ENCODE measurements at regions of chr16 and their contacts with region 1.

Region 1: GRCh38 chr16:69565671-69566239 is at the start of gene NFAT5:
- DNase-seq: peak; percentile 94
- ATAC-seq: peak; percentile 25
- H3K4me3 Mint-ChIP-seq: peak within 1 kb of the TSS; percentile 99
- H3K27ac Mint-ChIP-seq: peak within 1 kb of the TSS; percentile 99
- H3K4me1 Mint-ChIP-seq: peaks cover 54% of the 10 kb centered on the region
- H3K27me3 Mint-ChIP-seq: no peaks in the 10 kb centered on the region
- total RNA-seq, gene NFAT5: 29.6 to 37.9 TPM

Region 2: GRCh38 chr16:68756250-68756915 is 809.4 kb before region 1 on chr16:
- CTCF ChIA-PET with region 1: no interaction called
- POLR2A ChIA-PET with region 1: interaction called, 5 read pairs
- intact Hi-C with region 1: loop called in 1 of 2 experiments (anchors 2 kb)
- DNase-seq: peak; percentile 90
- ATAC-seq: peak; percentile 69
- H3K4me3 Mint-ChIP-seq: peak overlapping the region; percentile 52
- H3K27ac Mint-ChIP-seq: peak overlapping the region; percentile 97
- H3K4me1 Mint-ChIP-seq: peaks cover 66% of the 10 kb centered on the region
- H3K27me3 Mint-ChIP-seq: no peaks in the 10 kb centered on the region

Region 3: DNA sequence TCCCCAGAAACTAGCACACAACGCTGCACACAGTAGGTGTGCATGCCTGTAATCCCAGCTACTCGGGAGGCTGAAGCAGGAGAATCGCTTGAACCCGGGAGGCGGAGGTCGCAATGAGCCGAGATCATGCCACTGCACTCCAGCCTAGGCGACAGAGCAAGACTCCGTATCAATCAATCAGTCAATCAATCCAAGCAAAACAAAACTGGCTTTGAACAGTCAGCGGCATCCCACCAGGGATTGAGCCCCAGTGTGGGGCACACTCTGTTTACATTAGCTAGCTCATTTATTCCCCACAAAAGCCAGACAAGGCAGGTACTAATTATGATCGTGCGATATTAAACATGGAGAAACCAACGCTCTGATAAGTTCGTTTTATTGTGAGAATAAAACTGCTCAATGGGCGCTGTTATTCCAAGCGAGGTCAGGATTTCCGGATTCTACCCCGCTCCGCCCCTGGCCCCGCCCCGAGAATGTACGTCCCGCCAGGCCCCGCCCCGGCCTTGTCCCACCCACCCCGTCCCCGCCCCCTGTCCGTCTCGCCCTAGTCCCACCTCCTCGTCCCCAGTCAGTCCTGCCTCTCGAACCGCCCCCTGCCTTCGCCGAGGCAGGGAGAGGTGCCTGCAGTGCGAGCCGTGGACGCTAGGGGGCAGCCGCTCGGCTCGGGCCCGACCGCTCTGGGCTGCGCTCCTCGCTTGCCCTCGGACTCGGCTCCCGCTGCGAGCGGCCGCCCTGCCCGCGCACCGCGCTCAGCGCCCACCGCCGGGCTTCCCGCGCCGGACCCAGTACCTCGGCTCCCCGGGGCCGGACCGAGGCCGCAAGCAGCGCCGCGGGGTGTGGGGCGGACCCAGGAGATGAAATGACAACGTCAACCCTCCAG is 254.9 kb before region 1 on chr16 and contains the start of gene VPS4A:
- CTCF ChIA-PET with region 1: no interaction called
- POLR2A ChIA-PET with region 1: no interaction called
- intact Hi-C with region 1: loop called in 1 of 2 experiments (anchors 1 kb)
- DNase-seq: peak; percentile 98
- ATAC-seq: peak; percentile 97
- H3K4me3 Mint-ChIP-seq: peak within 1 kb of the TSS; percentile 100
- H3K27ac Mint-ChIP-seq: peak within 1 kb of the TSS; percentile 97
- H3K4me1 Mint-ChIP-seq: peaks cover 26% of the 10 kb centered on the region
- H3K27me3 Mint-ChIP-seq: no peaks in the 10 kb centered on the region
- total RNA-seq, gene VPS4A: 28.4 to 31.9 TPM

Region 4: DNA sequence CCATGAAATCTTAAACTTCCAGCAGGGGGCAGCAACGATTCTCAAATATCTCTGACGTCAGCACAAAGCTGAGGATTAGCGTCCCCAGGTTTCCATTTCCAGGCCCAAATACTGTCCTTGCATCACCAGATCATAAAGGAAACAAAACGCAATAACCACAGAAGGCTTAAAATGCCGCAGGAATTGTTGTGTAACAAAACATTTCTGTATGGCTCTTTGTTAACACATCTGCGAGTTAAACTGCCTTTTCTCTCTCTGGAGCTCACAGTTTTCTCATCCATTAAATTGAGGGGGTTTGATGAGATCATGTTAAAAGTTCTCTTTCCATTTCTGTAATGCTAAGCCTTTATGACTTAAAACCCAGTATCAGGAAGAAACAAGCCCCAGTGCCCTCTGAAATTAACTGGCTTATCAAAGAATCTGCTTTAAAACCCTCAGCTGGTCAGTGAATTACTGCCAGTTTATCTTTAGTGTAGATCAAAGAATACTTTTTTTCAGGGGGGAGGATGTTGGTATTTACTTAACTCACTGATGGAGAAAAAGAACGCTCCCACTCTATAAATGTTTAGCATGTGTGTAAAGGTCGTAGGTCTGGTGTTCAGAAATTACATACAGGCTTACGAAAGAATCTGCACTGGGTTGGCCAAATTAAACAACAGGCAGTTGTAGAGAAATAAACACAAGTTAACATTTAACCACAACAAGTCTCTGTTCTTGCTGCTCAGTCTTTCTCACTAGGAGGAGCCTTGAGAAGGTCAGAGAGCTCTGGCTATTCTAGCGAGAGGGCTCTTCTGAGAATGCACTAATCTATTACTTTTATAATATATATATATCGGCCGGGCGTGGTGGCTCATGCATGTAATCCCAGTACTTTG is 169.3 kb before region 1 on chr16:
- CTCF ChIA-PET with region 1: interaction called, 12 read pairs
- POLR2A ChIA-PET with region 1: no interaction called
- intact Hi-C with region 1: loop called (anchors 1 kb)
- DNase-seq: peak; percentile 83
- ATAC-seq: peak; percentile 63
- H3K4me3 Mint-ChIP-seq: no peak overlapping the region
- H3K27ac Mint-ChIP-seq: peak overlapping the region; percentile 70
- H3K4me1 Mint-ChIP-seq: peaks cover 20% of the 10 kb centered on the region
- H3K27me3 Mint-ChIP-seq: no peaks in the 10 kb centered on the region

Region 5: DNA sequence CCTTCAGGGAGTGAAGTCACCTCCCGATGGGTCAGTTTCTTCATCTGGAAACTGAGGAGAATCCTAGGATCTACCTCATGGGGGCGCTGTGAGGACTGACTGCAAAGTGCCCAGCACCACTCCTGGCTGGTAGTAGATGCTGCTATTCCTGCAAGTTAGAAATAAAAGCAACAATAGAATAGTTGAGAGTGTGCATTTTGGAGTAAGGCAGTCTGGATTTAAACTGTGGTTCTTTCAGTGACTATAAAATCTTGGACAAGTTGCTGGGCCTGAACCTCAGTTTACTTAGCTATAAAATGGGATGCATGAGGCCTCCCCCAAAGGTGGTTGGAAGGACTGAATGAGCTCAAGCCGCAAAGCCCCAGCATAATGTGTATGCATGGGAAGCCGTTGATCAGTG is 70.8 kb before region 1 on chr16:
- CTCF ChIA-PET with region 1: no interaction called
- POLR2A ChIA-PET with region 1: no interaction called
- intact Hi-C with region 1: loop called in 1 of 2 experiments (anchors 1 kb)
- DNase-seq: peak; percentile 76
- ATAC-seq: peak; percentile 71
- H3K4me3 Mint-ChIP-seq: no peak overlapping the region
- H3K27ac Mint-ChIP-seq: peak overlapping the region; percentile 19
- H3K4me1 Mint-ChIP-seq: no peaks in the 10 kb centered on the region
- H3K27me3 Mint-ChIP-seq: no peaks in the 10 kb centered on the region

Region 6: DNA sequence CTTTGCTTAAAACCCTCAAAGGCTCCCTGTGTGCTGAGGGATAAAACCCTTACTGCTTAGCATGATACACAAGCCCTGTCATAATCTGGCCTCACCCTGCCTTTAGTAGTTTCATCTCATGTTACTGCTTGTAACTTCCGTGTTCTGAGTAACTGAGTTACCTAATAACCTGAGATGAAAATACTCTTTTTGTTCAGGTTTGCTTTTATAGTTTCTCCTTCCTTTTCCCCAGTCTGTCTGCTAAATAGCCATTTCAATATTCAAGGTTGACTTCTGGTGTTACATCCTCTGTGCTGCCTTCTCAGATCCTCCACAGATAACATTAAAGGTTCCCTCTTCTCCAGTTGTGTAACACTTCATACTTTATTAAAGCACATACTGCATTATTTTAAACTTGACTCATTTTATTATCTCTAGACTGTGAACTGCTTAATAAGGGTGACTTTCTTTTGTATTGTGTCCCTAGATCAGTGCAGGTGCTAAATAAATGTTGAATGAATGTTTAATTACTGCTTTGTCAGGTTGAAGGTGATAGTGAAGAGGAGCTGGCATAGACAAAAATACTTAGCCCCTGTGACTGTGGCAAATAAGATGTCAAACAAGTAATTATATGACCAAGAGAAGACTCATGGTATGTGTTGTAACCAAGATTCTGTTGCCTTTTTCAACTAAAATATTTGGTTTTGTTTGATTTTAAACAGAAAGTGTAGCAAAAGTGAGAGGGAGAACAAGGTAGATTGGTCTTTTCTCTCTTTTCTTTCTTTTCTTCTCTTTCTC is 47.8 kb after region 1 on chr16:
- CTCF ChIA-PET with region 1: no interaction called
- POLR2A ChIA-PET with region 1: interaction called, 10 read pairs
- intact Hi-C with region 1: loop called in 1 of 2 experiments (anchors 5 kb)
- DNase-seq: no peak
- ATAC-seq: peak; percentile 93
- H3K4me3 Mint-ChIP-seq: no peak overlapping the region
- H3K27ac Mint-ChIP-seq: peak overlapping the region; percentile 28
- H3K4me1 Mint-ChIP-seq: peaks cover 49% of the 10 kb centered on the region
- H3K27me3 Mint-ChIP-seq: no peaks in the 10 kb centered on the region

Measured in activated CD4-positive, alpha-beta T cell treated with anti-CD3 and anti-CD28 coated beads for 36 hours (primary cell).